Psoas muscle (tissue), 8 donors: ENCODE measurements at regions of chr15 and their contacts with region 1.

Region 1: DNA sequence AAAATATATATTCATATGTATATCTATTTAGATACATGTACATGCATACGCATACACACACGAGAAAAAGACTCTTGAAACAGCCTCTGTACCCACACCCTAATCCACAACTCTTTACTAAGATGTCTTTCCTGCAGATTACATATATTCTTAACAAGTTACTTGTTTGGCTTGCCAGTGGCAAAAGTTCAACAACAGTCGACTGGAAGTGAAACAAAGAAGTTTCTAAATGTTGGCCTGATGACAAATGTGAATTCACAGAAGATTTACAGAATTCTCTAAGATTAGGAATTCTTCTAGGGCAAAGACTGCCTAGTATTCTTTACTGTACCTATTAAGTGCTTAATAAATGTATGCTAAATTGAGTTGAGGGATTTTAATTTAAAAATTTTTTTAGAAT is 116.8 kb downstream of the CDIN1 start:
- DNase-seq: no peak
- ATAC-seq: no peak
- H3K4me3 ChIP-seq: no peak overlapping the region
- H3K27ac ChIP-seq: no peak overlapping the region
- H3K4me1 ChIP-seq: no peaks in the 10 kb centered on the region
- H3K27me3 ChIP-seq: no peaks in the 10 kb centered on the region
- CTCF ChIP-seq: no peak

Region 2: DNA sequence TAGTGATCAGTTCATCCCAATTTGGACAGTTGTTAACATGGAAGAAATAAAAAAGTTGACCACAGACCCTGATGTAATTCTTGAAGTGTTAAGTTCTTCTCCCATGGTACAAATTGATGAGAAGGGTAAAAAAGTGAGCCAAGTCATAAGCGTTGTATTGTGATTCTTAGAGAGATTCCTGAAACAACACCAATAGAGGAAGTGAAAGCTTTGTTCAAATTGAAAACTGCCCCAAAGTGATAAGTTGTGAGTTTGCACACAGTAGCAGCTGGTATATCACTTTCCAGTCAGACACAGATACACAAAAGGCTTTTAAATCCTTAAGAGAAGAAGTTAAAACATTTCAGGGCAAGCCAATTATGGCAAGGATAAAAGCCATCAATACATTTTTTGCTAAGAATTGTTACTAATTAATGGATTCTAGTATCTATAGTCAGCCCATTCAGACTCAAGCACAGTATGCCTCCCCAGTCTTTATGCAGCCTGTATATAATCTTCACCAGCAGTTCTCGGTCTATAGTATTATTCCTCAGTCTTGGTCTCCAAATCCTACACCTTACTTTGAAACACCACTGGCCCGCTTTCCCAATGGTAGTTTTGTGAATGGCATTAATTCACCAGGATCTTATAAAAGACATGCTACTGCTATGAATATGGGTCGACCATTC is 78.5 kb before region 1 on chr15:
- intact Hi-C with region 1: no loop called
- DNase-seq: no peak
- ATAC-seq: no peak
- H3K4me3 ChIP-seq: no peak overlapping the region
- H3K27ac ChIP-seq: no peak overlapping the region
- H3K4me1 ChIP-seq: peaks cover 15% of the 10 kb centered on the region
- H3K27me3 ChIP-seq: no peaks in the 10 kb centered on the region
- CTCF ChIP-seq: no peak

Region 3: GRCh38 chr15:36645106-36645505 is 51.1 kb before region 1 on chr15:
- intact Hi-C with region 1: loop called in 1 of 2 experiments (anchors 10 kb)
- DNase-seq: no peak
- ATAC-seq: no peak
- H3K4me3 ChIP-seq: no peak overlapping the region
- H3K27ac ChIP-seq: no peak overlapping the region
- H3K4me1 ChIP-seq: peaks cover 12% of the 10 kb centered on the region
- H3K27me3 ChIP-seq: no peaks in the 10 kb centered on the region
- CTCF ChIP-seq: no peak